Caco-2 (cell line): ENCODE measurements at regions of chr3 and their contacts with region 1.

Region 1: DNA sequence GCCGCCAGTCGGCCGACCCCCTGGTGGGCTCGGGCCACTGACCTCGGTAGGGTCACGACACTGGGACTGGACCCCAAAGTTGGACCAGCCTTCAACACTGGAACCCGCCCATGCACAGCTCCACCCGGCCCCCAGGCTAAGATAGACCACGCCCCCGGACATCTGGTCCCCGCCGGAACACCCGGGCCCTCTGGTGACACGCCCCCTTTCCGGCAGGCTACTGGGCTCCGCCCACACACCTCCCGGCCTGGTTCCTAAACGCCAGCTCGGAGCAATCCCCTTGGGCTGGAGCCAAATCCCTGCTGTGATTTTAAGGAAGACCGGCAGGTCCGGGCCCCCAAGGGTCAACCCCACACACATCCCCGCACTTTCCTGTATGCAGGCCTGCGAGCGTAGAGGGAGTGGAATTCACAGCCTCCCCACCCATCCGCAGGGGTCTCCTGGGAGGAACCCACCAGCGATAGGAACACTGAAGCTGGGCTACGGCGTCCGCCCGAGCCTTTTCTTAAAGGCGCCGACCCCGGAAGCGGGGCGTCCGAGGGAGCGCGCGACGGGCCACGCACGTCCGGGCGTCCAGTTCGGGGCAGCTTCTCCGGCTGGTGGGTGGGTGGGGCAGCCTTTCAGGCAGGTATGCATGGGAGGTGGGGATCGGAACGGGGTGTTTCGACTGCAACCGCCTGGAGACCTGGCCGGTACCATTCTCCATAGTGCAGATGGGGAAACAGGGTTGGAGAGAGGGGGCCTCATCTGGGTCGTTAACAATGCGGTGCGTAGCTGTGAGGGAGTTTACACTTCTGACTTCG is at the start of gene HEMK1:
- DNase-seq: peak; percentile 96 to 97
- H3K4me3 ChIP-seq: peak within 1 kb of the TSS; percentile 92
- H3K4me3 Mint-ChIP-seq: peak within 1 kb of the TSS; percentile 94
- H3K27ac Mint-ChIP-seq: peak within 1 kb of the TSS; percentile 97
- H3K4me1 ChIP-seq: 0 out of 2 replicates have a peak, but pooled peaks cover 5% of the 10 kb centered on the region
- H3K4me1 Mint-ChIP-seq: no peaks in the 10 kb centered on the region
- H3K27me3 ChIP-seq: no peaks in the 10 kb centered on the region
- H3K27me3 Mint-ChIP-seq: peaks cover 3% of the 10 kb centered on the region
- CTCF ChIP-seq: no peak
- total RNA-seq, gene HEMK1: 12.6 and 14.3 TPM in 2 replicates

Region 2: GRCh38 chr3:50600841-50601591 is 31.9 kb after region 1 on chr3:
- CTCF ChIA-PET with region 1: interaction called, 5 read pairs
- POLR2A ChIA-PET with region 1: interaction called, 12 read pairs
- intact Hi-C with region 1: no loop called
- DNase-seq: peak; percentile 87 to 93
- H3K4me3 ChIP-seq: no peak overlapping the region
- H3K4me3 Mint-ChIP-seq: peak overlapping the region; percentile 70
- H3K27ac Mint-ChIP-seq: peak overlapping the region; percentile 98
- H3K4me1 ChIP-seq: peaks cover 37% of the 10 kb centered on the region
- H3K4me1 Mint-ChIP-seq: peaks cover 20% of the 10 kb centered on the region
- H3K27me3 ChIP-seq: no peaks in the 10 kb centered on the region
- H3K27me3 Mint-ChIP-seq: no peaks in the 10 kb centered on the region
- CTCF ChIP-seq: no peak

Region 3: DNA sequence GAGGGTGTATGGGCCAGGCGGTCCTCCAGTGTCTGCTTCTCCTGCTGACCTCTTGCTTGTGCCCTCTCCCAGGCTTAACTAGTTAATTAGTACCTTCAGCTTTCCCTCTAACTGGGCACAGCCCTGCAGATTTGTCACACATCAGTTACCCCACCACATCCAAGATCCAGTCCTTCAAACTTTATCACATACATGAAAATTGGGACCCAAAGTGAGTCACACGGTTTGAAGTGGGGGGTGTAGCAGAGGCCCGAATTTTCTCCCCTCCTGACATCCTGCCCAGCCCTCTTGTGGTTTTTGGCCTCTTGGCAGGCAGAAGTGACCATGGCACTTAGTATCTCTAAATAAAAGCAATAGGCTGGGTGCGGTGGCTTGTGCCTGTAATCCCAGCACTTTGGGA is 51.7 kb after region 1 on chr3:
- CTCF ChIA-PET with region 1: interaction called, 11 read pairs
- POLR2A ChIA-PET with region 1: interaction called, 15 read pairs
- intact Hi-C with region 1: no loop called
- DNase-seq: no peak
- H3K4me3 ChIP-seq: no peak overlapping the region
- H3K4me3 Mint-ChIP-seq: no peak overlapping the region
- H3K27ac Mint-ChIP-seq: no peak overlapping the region
- H3K4me1 ChIP-seq: peaks cover 12% of the 10 kb centered on the region
- H3K4me1 Mint-ChIP-seq: peaks cover 18% of the 10 kb centered on the region
- H3K27me3 ChIP-seq: no peaks in the 10 kb centered on the region
- H3K27me3 Mint-ChIP-seq: no peaks in the 10 kb centered on the region
- CTCF ChIP-seq: no peak

Region 4: DNA sequence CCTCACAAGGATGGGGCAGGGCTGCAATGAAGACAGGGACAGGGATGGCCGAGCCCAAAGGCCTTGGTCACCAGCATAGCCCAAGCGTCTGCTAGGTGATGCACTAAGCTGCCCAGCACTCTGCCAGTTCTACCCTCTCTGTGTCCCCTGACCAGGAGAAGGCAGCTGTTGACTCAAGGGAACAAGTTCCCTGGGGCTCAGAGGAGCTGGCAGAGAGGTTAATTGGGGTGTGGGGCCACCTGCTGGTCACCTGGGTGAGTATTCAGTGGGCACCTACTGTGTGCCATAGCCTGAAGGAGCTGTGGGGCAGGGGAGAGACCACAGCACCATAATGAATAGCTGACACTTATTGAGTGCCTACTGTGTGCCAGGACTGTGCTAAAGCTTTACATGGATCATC is 83.6 kb after region 1 on chr3:
- CTCF ChIA-PET with region 1: interaction called, 5 read pairs
- POLR2A ChIA-PET with region 1: no interaction called
- intact Hi-C with region 1: loop called (anchors 1 kb)
- DNase-seq: peak; percentile 67 to 72
- H3K4me3 ChIP-seq: no peak overlapping the region
- H3K4me3 Mint-ChIP-seq: no peak overlapping the region
- H3K27ac Mint-ChIP-seq: no peak overlapping the region
- H3K4me1 ChIP-seq: no peaks in the 10 kb centered on the region
- H3K4me1 Mint-ChIP-seq: no peaks in the 10 kb centered on the region
- H3K27me3 ChIP-seq: no peaks in the 10 kb centered on the region
- H3K27me3 Mint-ChIP-seq: peaks cover 3% of the 10 kb centered on the region
- CTCF ChIP-seq: peak; percentile 55 to 60

Region 5: GRCh38 chr3:50698269-50698668 is 129.1 kb after region 1 on chr3:
- CTCF ChIA-PET with region 1: no interaction called
- POLR2A ChIA-PET with region 1: no interaction called
- intact Hi-C with region 1: no loop called
- DNase-seq: no peak
- H3K4me3 ChIP-seq: no peak overlapping the region
- H3K4me3 Mint-ChIP-seq: no peak overlapping the region
- H3K27ac Mint-ChIP-seq: no peak overlapping the region
- H3K4me1 ChIP-seq: no peaks in the 10 kb centered on the region
- H3K4me1 Mint-ChIP-seq: no peaks in the 10 kb centered on the region
- H3K27me3 ChIP-seq: no peaks in the 10 kb centered on the region
- H3K27me3 Mint-ChIP-seq: peaks cover 26% of the 10 kb centered on the region
- CTCF ChIP-seq: no peak